WTC11 (cell line): ENCODE measurements at regions of chr13 and their contacts with region 1.

Region 1: DNA sequence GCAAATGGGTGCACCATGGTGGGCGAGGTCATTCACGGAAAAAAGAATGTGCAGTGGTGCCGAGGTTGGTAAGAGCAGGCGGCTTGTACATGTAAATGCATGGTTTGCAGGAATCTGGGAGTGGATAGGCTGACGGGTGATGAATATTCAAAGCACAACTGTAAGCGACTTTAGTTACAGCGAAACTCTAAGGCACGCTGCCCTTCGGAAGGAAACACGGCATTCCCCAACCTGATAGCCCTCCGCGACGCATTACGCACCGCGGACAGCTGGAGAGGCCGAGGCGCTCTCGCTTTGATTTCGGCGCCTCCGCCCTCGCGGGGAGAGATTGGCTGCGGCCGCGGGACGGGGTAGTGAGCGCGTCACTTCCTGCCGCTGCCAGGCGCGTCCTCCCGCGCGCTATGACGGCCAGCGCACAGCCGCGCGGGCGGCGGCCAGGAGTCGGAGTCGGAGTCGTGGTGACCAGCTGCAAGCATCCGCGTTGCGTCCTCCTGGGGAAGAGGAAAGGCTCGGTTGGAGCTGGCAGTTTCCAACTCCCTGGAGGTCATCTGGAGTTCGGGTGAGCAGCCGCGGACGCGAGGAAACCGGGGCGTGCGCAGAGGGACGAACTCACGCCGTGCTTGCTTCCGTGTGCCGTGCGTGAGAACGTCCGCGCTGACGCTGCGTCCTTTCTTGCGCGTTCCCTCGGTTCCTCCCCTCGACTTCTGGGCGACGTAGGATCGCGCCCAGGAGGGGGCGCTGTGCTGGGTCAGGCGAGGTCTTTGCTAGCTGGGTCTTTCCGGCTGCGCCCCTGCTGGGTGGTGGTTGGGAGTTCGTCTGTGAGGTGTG is at the start of gene NUDT15:
- DNase-seq: peak; percentile 95
- ATAC-seq: peak; percentile 87
- H3K4me3 Mint-ChIP-seq: peak within 1 kb of the TSS; percentile 78
- H3K27ac Mint-ChIP-seq: peak within 1 kb of the TSS; percentile 100
- H3K4me1 Mint-ChIP-seq: peaks cover 22% of the 10 kb centered on the region
- H3K27me3 Mint-ChIP-seq: no peaks in the 10 kb centered on the region
- CTCF ChIP-seq: peak; percentile 96
- total RNA-seq, gene NUDT15: 42.8 to 48.8 TPM (median 45.6 TPM) in 3 replicates

Region 2: GRCh38 chr13:47964863-47965262 is 72.7 kb before region 1 on chr13:
- CTCF ChIA-PET with region 1: no interaction called
- POLR2A ChIA-PET with region 1: no interaction called
- DNase-seq: no peak
- ATAC-seq: no peak
- H3K4me3 Mint-ChIP-seq: no peak overlapping the region
- H3K27ac Mint-ChIP-seq: no peak overlapping the region
- H3K4me1 Mint-ChIP-seq: no peaks in the 10 kb centered on the region
- H3K27me3 Mint-ChIP-seq: no peaks in the 10 kb centered on the region
- CTCF ChIP-seq: no peak

Region 3: GRCh38 chr13:48000778-48001628 is 36.6 kb before region 1 on chr13 and contains the start of gene SUCLA2:
- CTCF ChIA-PET with region 1: interaction called, 21 read pairs
- POLR2A ChIA-PET with region 1: interaction called, 10 read pairs
- DNase-seq: peak; percentile 95
- ATAC-seq: peak; percentile 97
- H3K4me3 Mint-ChIP-seq: peak within 1 kb of the TSS; percentile 79
- H3K27ac Mint-ChIP-seq: peak within 1 kb of the TSS; percentile 97
- H3K4me1 Mint-ChIP-seq: peaks cover 52% of the 10 kb centered on the region
- H3K27me3 Mint-ChIP-seq: no peaks in the 10 kb centered on the region
- CTCF ChIP-seq: no peak
- total RNA-seq, gene SUCLA2: 47.6 to 66.8 TPM (median 51.1 TPM) in 3 replicates

Region 4: DNA sequence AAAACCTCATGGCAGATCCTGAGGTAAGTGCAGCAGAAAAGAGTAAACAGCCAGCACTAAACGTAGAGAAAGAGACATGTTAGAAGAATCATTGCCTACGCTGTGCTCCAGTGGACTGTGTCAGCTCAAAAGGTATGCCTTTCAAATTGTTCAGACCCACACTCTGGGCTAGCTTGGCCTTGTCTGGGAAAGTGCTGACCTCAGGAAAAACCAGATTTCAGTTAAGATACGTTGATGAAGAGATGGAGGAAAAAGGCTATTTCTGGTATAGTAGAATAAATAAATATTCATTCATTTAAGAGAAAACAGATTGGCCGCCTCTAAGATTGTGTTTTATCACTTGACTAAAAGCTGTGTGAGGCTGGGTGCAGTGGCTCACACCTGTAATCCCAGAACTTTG is 26.9 kb before region 1 on chr13:
- CTCF ChIA-PET with region 1: interaction called, 11 read pairs
- POLR2A ChIA-PET with region 1: interaction called, 3 read pairs
- DNase-seq: no peak
- ATAC-seq: no peak
- H3K4me3 Mint-ChIP-seq: no peak overlapping the region
- H3K27ac Mint-ChIP-seq: no peak overlapping the region
- H3K4me1 Mint-ChIP-seq: peaks cover 24% of the 10 kb centered on the region
- H3K27me3 Mint-ChIP-seq: no peaks in the 10 kb centered on the region
- CTCF ChIP-seq: no peak

Region 5: GRCh38 chr13:48094781-48095502 is 57.4 kb after region 1 on chr13 and contains the start of gene MED4:
- CTCF ChIA-PET with region 1: interaction called, 12 read pairs
- POLR2A ChIA-PET with region 1: interaction called, 7 read pairs
- DNase-seq: peak; percentile 97
- ATAC-seq: peak; percentile 94
- H3K4me3 Mint-ChIP-seq: peak within 1 kb of the TSS; percentile 95
- H3K27ac Mint-ChIP-seq: peak within 1 kb of the TSS; percentile 90
- H3K4me1 Mint-ChIP-seq: peaks cover 25% of the 10 kb centered on the region; the same call in 1 of the 2 replicates
- H3K27me3 Mint-ChIP-seq: peaks cover 5% of the 10 kb centered on the region; the same call in 1 of the 2 replicates
- CTCF ChIP-seq: peak; percentile 98
- total RNA-seq, gene MED4: 36.9 to 48.1 TPM (median 43.2 TPM) in 3 replicates